ENCODE measurements at regions of chr2 and their contacts with region 1.

Region 1: DNA sequence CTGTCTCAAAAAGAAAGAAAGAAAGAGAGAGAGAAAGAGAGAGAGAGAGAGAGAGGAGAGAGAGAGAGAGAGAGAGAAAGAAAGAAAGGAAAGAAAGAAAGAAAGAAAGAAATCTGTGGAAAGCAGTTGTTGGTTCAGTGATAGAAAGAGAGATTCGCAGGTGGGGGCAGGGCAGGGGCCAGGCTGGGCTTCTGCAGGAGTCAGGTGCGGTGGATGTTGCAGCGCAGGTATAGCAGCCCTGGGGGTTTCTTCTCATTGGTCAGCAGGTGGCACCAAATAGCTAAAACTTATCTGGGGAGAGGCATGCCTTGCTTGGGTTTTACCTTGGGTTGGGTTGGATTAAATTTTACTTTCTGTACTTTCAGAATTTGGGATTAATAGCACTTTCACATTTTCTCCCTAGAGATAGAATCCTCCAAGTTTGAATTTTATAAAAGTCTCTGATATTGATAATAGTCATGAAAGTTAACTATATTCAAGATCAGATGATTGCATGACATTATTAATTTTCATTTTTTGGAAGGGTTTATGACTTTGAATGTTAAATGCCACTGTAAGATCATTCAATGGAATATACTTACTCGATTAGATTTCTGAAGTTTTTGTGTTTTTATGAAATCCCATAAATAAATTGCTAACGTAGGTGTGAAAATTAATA is 66.6 kb downstream of the SPTBN1 start:
- DNase-seq: no peak
- H3K4me3 ChIP-seq: no peak overlapping the region
- H3K27ac ChIP-seq: no peak overlapping the region
- H3K4me1 ChIP-seq: peaks cover 0 to 67% (median 25%) of the 10 kb centered on the region in 4 donors
- H3K27me3 ChIP-seq: no peaks in the 10 kb centered on the region
- CTCF ChIP-seq: peak; percentile 46 to 55

Region 2: GRCh38 chr2:54428108-54428831 is 94.5 kb before region 1 on chr2:
- intact Hi-C with region 1: no loop called
- DNase-seq: peak in 1 of 2 donors; percentile 51
- H3K4me3 ChIP-seq: no peak overlapping the region
- H3K27ac ChIP-seq: peak overlapping the region; percentile 54 to 62
- H3K4me1 ChIP-seq: peaks cover 0 to 34% (median 14%) of the 10 kb centered on the region in 4 donors
- H3K27me3 ChIP-seq: no peaks in the 10 kb centered on the region
- CTCF ChIP-seq: no peak

Region 3: GRCh38 chr2:54482715-54483114 is 40.0 kb before region 1 on chr2:
- intact Hi-C with region 1: no loop called
- DNase-seq: peak; percentile 65 to 78
- H3K4me3 ChIP-seq: no peak overlapping the region
- H3K27ac ChIP-seq: peak overlapping the region; percentile 41 to 59
- H3K4me1 ChIP-seq: peaks cover 5 to 60% (median 29%) of the 10 kb centered on the region in 4 donors
- H3K27me3 ChIP-seq: no peaks in the 10 kb centered on the region
- CTCF ChIP-seq: no peak

Region 4: GRCh38 chr2:54704688-54705605 is 182.2 kb after region 1 on chr2:
- intact Hi-C with region 1: loop called (anchors 10 kb)
- DNase-seq: no peak
- H3K4me3 ChIP-seq: no peak overlapping the region
- H3K27ac ChIP-seq: no peak overlapping the region
- H3K4me1 ChIP-seq: peaks cover 0 to 14% (median 10%) of the 10 kb centered on the region in 4 donors
- H3K27me3 ChIP-seq: no peaks in the 10 kb centered on the region
- CTCF ChIP-seq: peak; percentile 56 to 78